Activated CD4-positive, alpha-beta T cell treated with anti-CD3 and anti-CD28 coated beads for 36 hours (primary cell): ENCODE measurements at regions of chr7 and their contacts with region 1.

Region 1: DNA sequence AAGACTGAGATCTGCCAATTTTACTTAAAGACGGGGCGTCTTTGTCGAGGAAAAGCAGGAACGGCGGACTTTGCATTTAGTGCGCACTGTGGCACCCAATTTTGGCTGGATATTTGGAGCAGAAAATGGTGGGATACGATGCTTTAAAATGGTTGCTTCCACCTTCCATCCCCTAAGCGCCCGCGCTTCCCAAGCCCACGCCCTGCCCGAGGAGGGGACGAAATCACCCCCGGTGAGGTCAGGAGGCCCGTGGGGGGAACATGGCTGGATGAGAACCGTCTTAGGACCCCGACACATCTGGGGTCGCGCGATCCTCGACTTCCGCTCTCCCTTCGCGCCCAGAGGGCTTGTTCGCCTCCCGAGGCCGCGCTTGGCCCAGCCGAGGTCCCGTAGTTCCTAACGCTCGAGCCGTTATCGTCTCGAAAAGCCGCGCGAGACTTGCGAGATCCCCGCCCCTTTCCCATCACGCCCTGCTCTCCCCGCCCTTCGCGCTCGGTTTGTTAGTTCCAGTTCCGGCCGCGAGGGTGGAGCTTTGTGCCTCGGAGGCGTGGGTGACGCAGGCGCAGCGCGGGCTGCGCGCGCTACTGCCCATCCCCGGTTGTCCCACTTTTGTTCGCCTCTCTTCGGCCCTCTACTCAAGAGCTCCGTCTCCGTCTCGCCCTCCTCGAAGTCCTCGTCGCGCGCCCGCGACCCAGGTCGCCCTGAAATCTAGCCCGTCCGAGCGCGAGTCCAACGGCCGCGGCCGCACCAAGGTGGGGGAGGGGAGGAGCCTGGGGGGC is at the start of gene SRRT:
- DNase-seq: peak; percentile 99
- ATAC-seq: peak; percentile 95
- H3K4me3 Mint-ChIP-seq: peak within 1 kb of the TSS; percentile 99
- H3K27ac Mint-ChIP-seq: peak within 1 kb of the TSS; percentile 99
- H3K4me1 Mint-ChIP-seq: peaks cover 45% of the 10 kb centered on the region
- H3K27me3 Mint-ChIP-seq: no peaks in the 10 kb centered on the region
- total RNA-seq, gene SRRT: 253 to 260 TPM

Region 2: DNA sequence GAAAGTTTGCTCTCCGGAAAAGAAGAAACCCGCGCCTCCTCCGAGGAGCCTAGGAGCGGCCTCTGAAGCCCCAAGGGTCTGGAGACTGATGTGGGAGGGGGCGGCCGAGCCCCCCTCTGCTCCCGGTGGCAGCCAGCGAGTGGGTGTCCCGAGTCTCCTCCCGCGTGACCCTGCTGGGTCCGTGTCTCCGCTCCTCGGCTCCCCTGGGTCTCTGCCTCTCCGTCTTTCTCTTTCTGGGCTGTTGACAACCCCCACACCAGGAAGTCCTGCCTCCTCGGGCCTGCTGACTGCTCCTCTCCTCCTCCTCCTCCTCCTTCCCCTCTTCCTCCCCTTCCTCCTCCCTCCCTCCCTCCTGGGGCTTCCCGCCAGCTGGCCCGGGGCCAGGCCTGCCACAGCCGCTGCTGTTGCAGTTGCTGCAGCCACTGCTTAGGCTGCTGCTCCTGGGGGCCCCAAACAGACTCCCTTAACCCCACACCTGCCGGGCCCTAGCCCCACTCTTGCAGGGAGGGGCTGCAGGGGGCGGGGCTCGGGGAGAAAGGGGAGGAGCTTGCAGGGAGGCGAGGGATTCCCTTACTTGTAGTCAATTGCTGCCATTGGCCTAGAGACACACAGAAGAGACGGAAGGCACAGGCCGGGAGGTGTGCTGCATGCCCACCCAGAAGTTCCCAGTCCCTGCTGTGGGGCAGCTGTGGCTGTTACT is 395.6 kb before region 1 on chr7 and contains the start of gene TSC22D4:
- CTCF ChIA-PET with region 1: no interaction called
- POLR2A ChIA-PET with region 1: no interaction called
- intact Hi-C with region 1: loop called in 1 of 2 experiments (anchors 1 kb)
- DNase-seq: peak; percentile 96
- ATAC-seq: peak; percentile 79
- H3K4me3 Mint-ChIP-seq: peak within 1 kb of the TSS; percentile 92
- H3K27ac Mint-ChIP-seq: peak within 1 kb of the TSS; percentile 94
- H3K4me1 Mint-ChIP-seq: peaks cover 41% of the 10 kb centered on the region
- H3K27me3 Mint-ChIP-seq: no peaks in the 10 kb centered on the region
- total RNA-seq, gene TSC22D4: 78.5 to 85.7 TPM

Region 3: GRCh38 chr7:100691676-100692577 is 182.8 kb before region 1 on chr7:
- CTCF ChIA-PET with region 1: interaction called, 5 read pairs
- POLR2A ChIA-PET with region 1: interaction called, 4 read pairs
- intact Hi-C with region 1: loop called in 1 of 2 experiments (anchors 1 kb)
- DNase-seq: peak; percentile 92
- ATAC-seq: peak; percentile 78
- H3K4me3 Mint-ChIP-seq: peak overlapping the region; percentile 89
- H3K27ac Mint-ChIP-seq: peak overlapping the region; percentile 88
- H3K4me1 Mint-ChIP-seq: peaks cover 48% of the 10 kb centered on the region
- H3K27me3 Mint-ChIP-seq: no peaks in the 10 kb centered on the region

Region 4: DNA sequence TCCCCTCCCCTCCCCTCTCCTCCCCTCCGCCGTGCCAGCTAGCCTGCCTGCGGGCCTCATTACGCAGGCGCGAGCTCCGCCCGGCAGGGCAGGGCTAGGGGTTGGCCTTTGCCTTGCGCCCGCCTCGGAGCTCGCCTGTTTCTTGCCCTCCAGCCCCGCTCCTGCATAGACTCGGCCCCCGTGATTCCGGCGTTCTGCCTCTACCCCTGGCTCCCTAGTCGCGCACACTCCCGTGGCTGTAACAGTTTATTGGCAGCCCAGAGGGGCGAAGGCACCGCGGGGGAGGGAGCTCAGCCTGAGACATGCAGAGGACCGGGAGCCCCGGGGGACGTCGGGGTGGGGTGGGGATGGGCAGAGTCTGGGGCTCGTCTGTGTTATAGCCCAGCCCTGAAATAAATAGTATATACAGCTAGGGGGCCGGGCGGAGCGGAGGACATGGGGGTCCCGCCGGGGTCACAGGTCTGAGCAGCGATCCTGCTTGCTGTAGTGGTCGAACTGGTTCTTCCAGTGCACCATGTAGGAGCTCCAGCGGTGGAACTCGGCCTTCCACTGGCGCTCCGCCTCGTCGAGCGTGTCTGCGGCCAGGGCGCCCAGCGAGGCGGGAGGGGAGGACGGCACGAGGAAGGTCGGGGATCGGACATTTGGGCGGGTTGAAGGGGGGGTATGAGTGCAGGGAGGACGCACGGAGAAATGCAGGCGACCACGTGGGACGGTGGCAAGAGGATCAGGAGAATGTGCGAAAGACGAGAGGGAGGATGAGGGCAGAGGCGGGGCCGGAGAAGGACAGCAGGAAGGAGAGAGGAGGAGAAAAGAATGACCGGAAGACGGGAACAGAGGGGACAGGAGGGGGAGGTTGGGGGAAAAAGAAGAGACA is 15.2 kb after region 1 on chr7:
- CTCF ChIA-PET with region 1: interaction called, 24 read pairs
- POLR2A ChIA-PET with region 1: interaction called, 73 read pairs
- intact Hi-C with region 1: loop called (anchors 1 kb)
- DNase-seq: peak; percentile 96
- ATAC-seq: peak; percentile 95
- H3K4me3 Mint-ChIP-seq: peak overlapping the region; percentile 77
- H3K27ac Mint-ChIP-seq: no peak overlapping the region
- H3K4me1 Mint-ChIP-seq: peaks cover 38% of the 10 kb centered on the region
- H3K27me3 Mint-ChIP-seq: peaks cover 14% of the 10 kb centered on the region

Region 5: GRCh38 chr7:101153969-101154692 is 279.4 kb after region 1 on chr7 and contains the start of gene AP1S1:
- CTCF ChIA-PET with region 1: no interaction called
- POLR2A ChIA-PET with region 1: no interaction called
- intact Hi-C with region 1: loop called in 1 of 2 experiments (anchors 1 kb)
- DNase-seq: peak; percentile 97
- ATAC-seq: peak; percentile 90
- H3K4me3 Mint-ChIP-seq: peak within 1 kb of the TSS; percentile 76
- H3K27ac Mint-ChIP-seq: peak within 1 kb of the TSS; percentile 22
- H3K4me1 Mint-ChIP-seq: peaks cover 12% of the 10 kb centered on the region
- H3K27me3 Mint-ChIP-seq: peaks cover 2% of the 10 kb centered on the region
- total RNA-seq, gene AP1S1: 33.7 to 43.0 TPM

Region 6: DNA sequence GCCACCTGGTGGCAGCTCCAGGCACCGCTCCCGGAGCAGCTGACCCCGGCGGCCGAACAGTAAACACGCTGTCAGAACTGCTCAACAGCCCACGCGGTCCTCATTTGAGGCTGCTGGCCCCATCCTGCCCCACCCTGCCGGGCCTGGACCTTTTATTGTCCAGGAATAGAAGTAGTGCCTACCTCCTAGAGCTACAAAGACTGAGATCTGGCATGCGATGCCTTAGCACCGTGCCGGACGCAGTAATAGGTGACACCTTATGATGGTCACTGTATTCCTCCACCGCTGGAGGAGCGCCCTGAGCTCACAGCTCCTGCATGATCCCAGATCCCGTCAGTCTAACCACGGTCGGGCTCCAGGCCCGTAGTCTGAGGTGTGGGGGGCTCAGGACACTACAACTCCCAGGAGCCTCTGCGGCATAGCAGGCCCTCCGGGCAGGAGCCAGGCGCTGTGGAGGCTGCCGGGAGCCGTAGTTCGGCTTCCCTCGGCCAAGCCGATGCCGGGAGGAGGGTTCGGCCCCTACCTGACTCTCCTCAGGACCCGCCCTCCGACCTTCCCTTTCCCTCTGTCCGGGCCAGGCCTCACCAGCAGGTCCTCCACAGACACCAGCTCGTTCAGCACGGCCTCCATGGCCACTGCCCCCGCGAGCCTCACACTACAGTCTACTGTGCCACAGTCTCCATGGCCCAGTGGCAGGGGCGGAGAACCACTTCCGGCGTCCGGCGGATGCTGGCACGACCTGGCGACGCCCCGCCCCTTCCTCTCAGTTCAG is 369.8 kb after region 1 on chr7 and contains the start of gene FIS1:
- CTCF ChIA-PET with region 1: no interaction called
- POLR2A ChIA-PET with region 1: interaction called, 3 read pairs
- intact Hi-C with region 1: loop called in 1 of 2 experiments (anchors 1 kb)
- DNase-seq: peak; percentile 97
- ATAC-seq: peak; percentile 96
- H3K4me3 Mint-ChIP-seq: peak within 1 kb of the TSS; percentile 97
- H3K27ac Mint-ChIP-seq: peak within 1 kb of the TSS; percentile 97
- H3K4me1 Mint-ChIP-seq: peaks cover 25% of the 10 kb centered on the region
- H3K27me3 Mint-ChIP-seq: no peaks in the 10 kb centered on the region
- total RNA-seq, gene FIS1: 70.5 to 92.6 TPM

Region 7: DNA sequence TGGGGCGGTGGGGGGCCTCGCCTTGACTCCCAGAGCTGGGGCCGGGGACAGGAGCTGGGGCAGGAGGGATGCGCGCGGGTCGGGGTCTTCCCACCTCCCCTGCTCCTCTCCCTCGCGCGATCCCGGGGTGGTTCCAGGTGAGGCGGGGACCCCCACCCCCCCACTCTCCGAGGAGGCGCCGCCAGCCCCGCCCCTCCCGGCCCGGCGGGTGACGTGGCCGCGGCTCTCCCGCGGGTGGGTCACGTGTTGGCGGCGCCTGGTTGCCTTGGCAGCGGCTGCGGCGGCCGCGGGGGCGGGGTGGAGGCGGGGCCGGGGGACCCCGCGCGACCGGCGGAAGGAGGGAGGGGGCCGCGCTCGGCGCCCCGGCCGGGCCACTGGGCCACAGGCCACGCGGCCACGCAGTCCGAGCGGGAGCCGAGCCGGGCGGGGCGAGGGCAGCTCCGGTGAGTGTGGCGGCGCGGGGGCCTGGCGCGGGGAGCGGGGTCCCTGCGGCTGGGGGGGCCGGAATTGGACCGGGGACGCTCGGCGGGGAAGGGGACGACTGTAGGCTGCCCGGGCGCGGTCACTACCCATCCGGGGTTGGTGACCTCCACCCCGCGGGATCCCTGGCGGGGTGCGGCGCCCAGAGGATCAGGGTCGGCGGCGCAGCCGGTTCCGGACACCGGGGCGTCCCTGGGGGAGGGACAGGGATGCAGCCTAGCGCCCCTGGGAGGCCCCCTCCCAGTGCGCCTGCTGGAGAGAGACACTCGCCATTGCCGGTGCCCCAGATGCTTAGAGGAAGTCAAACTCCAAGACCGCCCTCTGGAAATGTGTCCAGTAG is 1558.7 kb after region 1 on chr7 and contains the start of gene ORAI2:
- CTCF ChIA-PET with region 1: no interaction called
- POLR2A ChIA-PET with region 1: no interaction called
- intact Hi-C with region 1: loop called in 1 of 2 experiments (anchors 5 kb)
- DNase-seq: peak; percentile 92
- ATAC-seq: peak; percentile 63
- H3K4me3 Mint-ChIP-seq: peak within 1 kb of the TSS; percentile 78
- H3K27ac Mint-ChIP-seq: peak within 1 kb of the TSS; percentile 69
- H3K4me1 Mint-ChIP-seq: peaks cover 41% of the 10 kb centered on the region
- H3K27me3 Mint-ChIP-seq: no peaks in the 10 kb centered on the region
- total RNA-seq, gene ORAI2: 20.8 to 25.1 TPM